ENCODE measurements at regions of chr7 and their contacts with region 1.

Region 1: GRCh38 chr7:25565949-25566348 is 337.7 kb upstream of the NPVF start:
- DNase-seq: peak; percentile 61
- H3K4me3 ChIP-seq: no peak overlapping the region
- H3K27ac ChIP-seq: no peak overlapping the region
- H3K27me3 ChIP-seq: peaks cover 9% of the 10 kb centered on the region
- CTCF ChIP-seq: peak; percentile 100

Region 2: GRCh38 chr7:25259587-25260243 is 306.2 kb before region 1 on chr7:
- CTCF ChIA-PET with region 1: interaction called, 137 read pairs
- POLR2A ChIA-PET with region 1: no interaction called
- DNase-seq: peak; percentile 53
- H3K4me3 ChIP-seq: no peak overlapping the region
- H3K27ac ChIP-seq: no peak overlapping the region
- H3K27me3 ChIP-seq: peaks cover 8% of the 10 kb centered on the region
- CTCF ChIP-seq: peak; percentile 91

Region 3: GRCh38 chr7:25389489-25390106 is 176.4 kb before region 1 on chr7:
- CTCF ChIA-PET with region 1: interaction called, 73 read pairs
- POLR2A ChIA-PET with region 1: no interaction called
- DNase-seq: no peak
- H3K4me3 ChIP-seq: no peak overlapping the region
- H3K27ac ChIP-seq: no peak overlapping the region
- H3K27me3 ChIP-seq: peaks cover 12% of the 10 kb centered on the region
- CTCF ChIP-seq: peak; percentile 60

Region 4: DNA sequence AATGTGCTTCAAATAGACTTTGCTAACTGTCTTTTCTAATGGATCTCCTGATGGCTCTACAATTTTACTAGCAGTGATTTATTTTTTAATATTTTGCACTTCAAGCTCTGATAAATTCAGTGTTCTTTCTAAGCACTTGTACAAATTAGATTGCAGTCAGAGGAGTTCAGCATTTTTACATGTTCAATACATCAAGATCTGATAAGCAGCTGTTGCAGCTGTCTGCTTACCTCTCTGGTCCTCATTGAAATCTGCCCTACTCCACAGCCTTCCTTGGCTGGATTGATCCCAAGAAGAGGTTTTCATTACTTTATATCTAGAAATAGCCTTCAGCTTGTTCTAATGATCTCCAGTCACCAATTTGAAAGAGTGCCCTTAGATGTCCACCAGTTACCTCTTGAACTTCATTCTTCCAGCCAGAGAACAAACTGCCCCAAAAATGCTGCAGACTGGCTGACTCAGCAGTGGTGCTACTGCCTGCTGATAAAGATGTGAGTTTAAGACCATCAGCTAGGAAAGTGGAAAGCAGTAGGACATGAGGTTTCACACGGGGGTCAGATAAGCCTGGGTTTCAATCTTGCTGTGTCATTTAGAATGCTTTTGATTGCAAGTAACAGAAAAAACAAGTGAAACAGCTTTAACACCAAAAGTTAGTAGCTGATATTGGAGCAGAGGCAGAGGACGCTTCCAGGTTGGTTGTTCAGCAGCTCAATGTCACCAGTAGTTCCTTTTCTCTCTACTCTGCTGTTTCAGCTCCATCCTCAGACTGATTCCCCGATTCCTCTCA is 13.2 kb after region 1 on chr7:
- CTCF ChIA-PET with region 1: interaction called, 49 read pairs
- POLR2A ChIA-PET with region 1: no interaction called
- DNase-seq: no peak
- H3K4me3 ChIP-seq: no peak overlapping the region
- H3K27ac ChIP-seq: no peak overlapping the region
- H3K27me3 ChIP-seq: peaks cover 3% of the 10 kb centered on the region
- CTCF ChIP-seq: no peak

Region 5: DNA sequence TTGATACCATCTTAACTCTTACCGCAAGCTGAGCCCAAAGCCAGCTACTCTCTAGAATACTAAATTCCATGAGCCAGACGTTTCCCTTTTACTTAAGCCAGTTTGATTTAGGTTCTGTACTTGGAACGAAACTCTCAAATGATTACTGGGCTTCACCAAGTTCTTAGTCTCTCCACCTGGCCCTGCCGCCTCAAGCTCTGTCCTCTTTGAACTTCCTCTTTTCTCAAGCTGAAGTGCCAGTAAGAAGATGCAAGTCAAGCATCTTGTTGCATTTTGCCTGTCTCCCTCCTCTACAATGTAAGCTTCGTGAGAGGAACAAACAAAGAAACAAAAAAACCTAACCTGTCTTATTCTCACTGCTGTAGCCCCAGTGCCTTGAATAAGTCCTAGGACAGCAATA is 20.6 kb after region 1 on chr7:
- CTCF ChIA-PET with region 1: interaction called, 49 read pairs
- POLR2A ChIA-PET with region 1: no interaction called
- DNase-seq: no peak
- H3K4me3 ChIP-seq: no peak overlapping the region
- H3K27ac ChIP-seq: no peak overlapping the region
- H3K27me3 ChIP-seq: peaks cover 3% of the 10 kb centered on the region
- CTCF ChIP-seq: no peak

Region 6: DNA sequence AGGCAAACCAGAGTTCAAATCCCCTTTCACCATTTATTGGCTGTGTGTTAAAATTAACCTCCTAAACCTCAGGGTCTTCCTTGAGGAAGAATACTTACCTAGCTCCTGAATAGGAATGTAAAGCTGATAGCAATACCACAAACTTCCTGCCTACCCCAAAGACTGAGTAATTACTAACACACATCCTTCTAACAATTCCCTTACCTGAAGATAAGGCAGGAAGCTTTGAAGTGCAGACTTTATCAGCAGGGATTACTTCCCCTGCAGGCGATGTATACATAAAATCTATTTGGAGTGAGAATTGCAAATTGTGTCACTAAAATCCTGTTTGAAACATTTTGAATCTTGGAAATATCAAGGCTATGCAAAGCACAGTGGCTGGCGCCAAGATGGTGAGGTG is 1697.8 kb after region 1 on chr7:
- CTCF ChIA-PET with region 1: interaction called, 13 read pairs
- POLR2A ChIA-PET with region 1: no interaction called
- DNase-seq: no peak
- H3K4me3 ChIP-seq: no peak overlapping the region
- H3K27ac ChIP-seq: no peak overlapping the region
- H3K27me3 ChIP-seq: no peaks in the 10 kb centered on the region
- CTCF ChIP-seq: no peak